ENCODE measurements at regions of chr14 and their contacts with region 1.

Region 1: GRCh38 chr14:91323671-91324605 is 79.4 kb upstream of the GPR68 start:
- DNase-seq: peak; percentile 93
- ATAC-seq: peak; percentile 81
- H3K4me3 Mint-ChIP-seq: peak overlapping the region; percentile 79
- H3K27ac Mint-ChIP-seq: peak overlapping the region; percentile 95
- H3K4me1 Mint-ChIP-seq: peaks cover 55% of the 10 kb centered on the region
- H3K27me3 Mint-ChIP-seq: no peaks in the 10 kb centered on the region

Region 2: GRCh38 chr14:91305650-91306431 is 18.1 kb before region 1 on chr14:
- POLR2A ChIA-PET with region 1: no interaction called
- DNase-seq: no peak
- ATAC-seq: no peak
- H3K4me3 Mint-ChIP-seq: no peak overlapping the region
- H3K27ac Mint-ChIP-seq: no peak overlapping the region
- H3K4me1 Mint-ChIP-seq: peaks cover 10% of the 10 kb centered on the region
- H3K27me3 Mint-ChIP-seq: no peaks in the 10 kb centered on the region

Region 3: GRCh38 chr14:91350813-91351511 is 27.0 kb after region 1 on chr14:
- POLR2A ChIA-PET with region 1: interaction called, 19 read pairs
- DNase-seq: peak; percentile 67
- ATAC-seq: peak; percentile 78
- H3K4me3 Mint-ChIP-seq: peak overlapping the region; percentile 85
- H3K27ac Mint-ChIP-seq: peak overlapping the region; percentile 96
- H3K4me1 Mint-ChIP-seq: peaks cover 78% of the 10 kb centered on the region
- H3K27me3 Mint-ChIP-seq: no peaks in the 10 kb centered on the region

Measured in activated naive CD8-positive, alpha-beta T cell treated with anti-CD3 and anti-CD28 coated beads, Interleukin-2, amount 10 ng/mL, durations not matched to agents 7 days and 5 days (primary cell).